H1 (cell line): ENCODE measurements at regions of chr18 and their contacts with region 1.

Region 1: GRCh38 chr18:58484989-58485981 is 143.6 kb downstream of the ALPK2 start:
- DNase-seq: peak in 1 of 2 experiments; percentile 53
- H3K4me3 ChIP-seq: peak overlapping the region in 1 of 4 experiments; percentile 31; a peak in 3 of 8 replicates
- H3K27ac ChIP-seq: no peak overlapping the region
- H3K4me1 ChIP-seq: peaks cover 3 to 13% (median 9%) of the 10 kb centered on the region in 4 experiments
- H3K27me3 ChIP-seq: peaks cover 0 to 4% (median 0%) of the 10 kb centered on the region in 4 experiments; a peak in 2 of 7 replicates
- CTCF ChIP-seq: peak in 1 of 3 experiments; percentile 1; a peak in 1 of 4 replicates
- EP300 ChIP-seq: no peak
- POLR2A ChIP-seq: no peak
- RAD21 ChIP-seq: peak in 1 of 2 experiments; percentile 25; a peak in 2 of 4 replicates

Region 2: DNA sequence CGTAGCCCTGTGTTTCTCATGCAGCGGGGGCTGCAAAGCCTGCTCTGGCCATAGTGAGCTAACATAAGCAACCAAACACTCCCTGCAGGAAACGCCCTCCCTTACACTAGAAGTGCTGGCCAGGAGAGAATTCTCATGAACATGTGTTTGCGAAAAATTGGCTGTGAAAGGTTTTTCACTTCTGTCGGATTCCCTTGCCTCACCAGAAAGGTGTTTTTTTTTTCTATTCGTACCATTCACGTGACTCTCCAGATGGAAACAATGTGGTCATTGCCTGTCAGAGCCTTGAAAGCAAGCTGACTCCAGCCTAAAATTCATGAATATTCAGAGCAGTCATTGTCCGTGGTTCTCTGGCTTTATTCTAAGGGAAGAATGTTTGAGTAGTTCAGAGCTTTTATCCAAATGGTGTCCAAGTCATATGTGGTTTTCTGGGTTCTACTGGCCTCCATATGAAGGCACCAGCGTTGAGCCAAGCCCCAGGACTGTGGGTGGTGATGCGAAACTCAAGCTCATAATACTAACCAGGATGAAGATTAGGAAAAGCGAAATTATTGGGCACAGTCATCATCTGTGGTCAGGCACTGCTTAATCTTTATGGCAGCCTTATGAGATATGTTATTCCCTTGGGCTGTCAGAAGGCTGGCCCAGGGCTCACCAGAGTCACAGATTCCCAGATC is 92.8 kb before region 1 on chr18:
- CTCF ChIA-PET with region 1: interaction called, 10 read pairs
- POLR2A ChIA-PET with region 1: no interaction called
- DNase-seq: no peak
- H3K4me3 ChIP-seq: no peak overlapping the region
- H3K27ac ChIP-seq: no peak overlapping the region
- H3K4me1 ChIP-seq: peaks cover 0 to 7% (median 0%) of the 10 kb centered on the region in 4 experiments; a peak in 3 of 7 replicates
- H3K27me3 ChIP-seq: no peaks in the 10 kb centered on the region
- CTCF ChIP-seq: no peak
- EP300 ChIP-seq: no peak
- POLR2A ChIP-seq: no peak
- RAD21 ChIP-seq: no peak

Region 3: GRCh38 chr18:58402247-58402646 is 83.0 kb before region 1 on chr18:
- CTCF ChIA-PET with region 1: interaction called, 15 read pairs
- POLR2A ChIA-PET with region 1: interaction called, 4 read pairs
- DNase-seq: no peak
- H3K4me3 ChIP-seq: no peak overlapping the region
- H3K27ac ChIP-seq: no peak overlapping the region
- H3K4me1 ChIP-seq: peaks cover 0 to 2% (median under 1%) of the 10 kb centered on the region in 4 experiments; a peak in 4 of 7 replicates
- H3K27me3 ChIP-seq: no peaks in the 10 kb centered on the region
- CTCF ChIP-seq: no peak
- EP300 ChIP-seq: no peak
- POLR2A ChIP-seq: no peak
- RAD21 ChIP-seq: no peak

Region 4: GRCh38 chr18:58407649-58408407 is 77.5 kb before region 1 on chr18:
- CTCF ChIA-PET with region 1: interaction called, 15 read pairs
- POLR2A ChIA-PET with region 1: interaction called, 4 read pairs
- DNase-seq: no peak
- H3K4me3 ChIP-seq: no peak overlapping the region
- H3K27ac ChIP-seq: no peak overlapping the region
- H3K4me1 ChIP-seq: peaks cover 0 to 3% (median 1%) of the 10 kb centered on the region in 4 experiments; a peak in 5 of 7 replicates
- H3K27me3 ChIP-seq: no peaks in the 10 kb centered on the region
- CTCF ChIP-seq: peak; percentile 1 to 28 (median 15); a peak in 3 of 4 replicates
- EP300 ChIP-seq: no peak
- POLR2A ChIP-seq: no peak
- RAD21 ChIP-seq: peak in 1 of 2 experiments; percentile 31; a peak in 1 of 4 replicates